Psoas muscle (tissue), 8 donors: ENCODE measurements at regions of chr9 and their contacts with region 1.

Region 1: DNA sequence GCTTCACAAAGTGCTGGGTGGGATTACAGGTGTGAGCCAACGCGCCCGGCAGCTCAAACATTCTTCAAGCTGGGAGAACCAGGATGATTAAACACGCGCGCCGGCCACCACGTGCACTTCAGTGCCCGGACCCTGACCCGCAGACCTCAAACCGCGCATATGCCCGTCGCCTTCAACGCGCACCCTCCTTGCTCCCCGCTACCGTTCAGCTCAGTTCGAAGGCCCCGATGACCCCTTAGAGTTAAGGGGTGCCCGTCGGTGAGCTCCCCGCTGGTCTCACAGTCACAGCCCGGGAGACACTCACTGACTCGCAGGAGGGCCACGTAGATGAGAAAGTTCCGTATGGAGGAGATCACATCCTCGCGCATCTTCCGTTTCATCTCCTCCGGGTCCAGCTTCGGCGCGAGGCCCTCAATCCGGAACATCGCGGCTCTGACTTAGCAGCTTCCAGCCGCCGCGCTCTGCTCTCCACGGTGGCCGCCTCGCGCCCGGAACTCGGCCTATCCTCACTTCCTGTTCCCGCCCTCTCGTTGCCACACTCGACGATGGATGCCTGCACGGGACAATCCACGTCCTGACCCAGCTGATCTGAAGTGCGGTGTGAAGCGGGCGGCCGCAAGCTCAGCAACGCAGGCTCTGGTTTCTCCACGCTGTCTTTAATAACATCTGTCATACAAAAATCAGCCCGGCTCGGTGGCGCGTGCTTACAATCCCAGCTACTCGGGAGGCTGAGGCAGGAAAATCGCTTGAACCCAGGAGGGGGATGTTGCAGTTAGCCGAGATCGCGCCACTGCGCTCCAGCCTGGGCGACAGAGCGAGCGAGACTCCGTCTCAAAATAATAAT is at the start of gene TOMM5:
- DNase-seq: peak; percentile 94 to 97
- ATAC-seq: peak; percentile 96 to 100 (median 98)
- H3K4me3 ChIP-seq: peak within 1 kb of the TSS; percentile 95
- H3K27ac ChIP-seq: peak within 1 kb of the TSS; percentile 92
- H3K4me1 ChIP-seq: peaks cover 24% of the 10 kb centered on the region
- H3K27me3 ChIP-seq: no peaks in the 10 kb centered on the region
- CTCF ChIP-seq: no peak
- total RNA-seq, gene TOMM5: 65.2 to 104 (median 98.9) TPM

Region 2: GRCh38 chr9:37575921-37576721 is 16.2 kb before region 1 on chr9 and contains the start of gene FBXO10:
- intact Hi-C with region 1: loop called in 1 of 2 experiments (anchors 2 kb)
- DNase-seq: peak; percentile 85 to 87
- ATAC-seq: peak; percentile 89
- H3K4me3 ChIP-seq: peak within 1 kb of the TSS; percentile 90
- H3K27ac ChIP-seq: peak within 1 kb of the TSS; percentile 98
- H3K4me1 ChIP-seq: peaks cover 39% of the 10 kb centered on the region
- H3K27me3 ChIP-seq: no peaks in the 10 kb centered on the region
- CTCF ChIP-seq: no peak
- total RNA-seq, gene FBXO10: 31.3 to 90.4 (median 43.0) TPM

Region 3: GRCh38 chr9:37645903-37646506 is 53.7 kb after region 1 on chr9:
- intact Hi-C with region 1: loop called in 1 of 2 experiments (anchors 5 kb)
- DNase-seq: no peak
- ATAC-seq: peak in 3 of 4 donors; percentile 68 to 72 (median 72)
- H3K4me3 ChIP-seq: no peak overlapping the region
- H3K27ac ChIP-seq: peak overlapping the region; percentile 57
- H3K4me1 ChIP-seq: peaks cover 14% of the 10 kb centered on the region
- H3K27me3 ChIP-seq: no peaks in the 10 kb centered on the region
- CTCF ChIP-seq: no peak

Region 4: GRCh38 chr9:37668116-37668601 is 75.8 kb after region 1 on chr9:
- intact Hi-C with region 1: loop called in 1 of 2 experiments (anchors 5 kb)
- DNase-seq: peak; percentile 34 to 69
- ATAC-seq: peak; percentile 89 to 92 (median 90)
- H3K4me3 ChIP-seq: peak overlapping the region; percentile 57
- H3K27ac ChIP-seq: peak overlapping the region; percentile 79
- H3K4me1 ChIP-seq: peaks cover 28% of the 10 kb centered on the region
- H3K27me3 ChIP-seq: no peaks in the 10 kb centered on the region
- CTCF ChIP-seq: peak; percentile 25

Region 5: GRCh38 chr9:37693260-37693659 is 100.9 kb after region 1 on chr9:
- intact Hi-C with region 1: no loop called
- DNase-seq: no peak
- ATAC-seq: peak; percentile 90 to 94 (median 92)
- H3K4me3 ChIP-seq: peak overlapping the region; percentile 63
- H3K27ac ChIP-seq: peak overlapping the region; percentile 81
- H3K4me1 ChIP-seq: peaks cover 9% of the 10 kb centered on the region
- H3K27me3 ChIP-seq: no peaks in the 10 kb centered on the region
- CTCF ChIP-seq: no peak

Region 6: GRCh38 chr9:37800631-37801286 is 208.4 kb after region 1 on chr9 and contains the start of gene DCAF10:
- intact Hi-C with region 1: loop called in 1 of 2 experiments (anchors 5 kb)
- DNase-seq: peak; percentile 90 to 93
- ATAC-seq: peak; percentile 96 to 98 (median 97)
- H3K4me3 ChIP-seq: peak within 1 kb of the TSS; percentile 82
- H3K27ac ChIP-seq: peak within 1 kb of the TSS; percentile 82
- H3K4me1 ChIP-seq: peaks cover 21% of the 10 kb centered on the region
- H3K27me3 ChIP-seq: no peaks in the 10 kb centered on the region
- CTCF ChIP-seq: no peak
- total RNA-seq, gene DCAF10: 20.2 to 27.2 (median 22.4) TPM

Region 7: GRCh38 chr9:37903647-37904444 is 311.5 kb after region 1 on chr9 and contains the start of gene SLC25A51:
- intact Hi-C with region 1: loop called in 1 of 2 experiments (anchors 10 kb)
- DNase-seq: peak; percentile 96
- ATAC-seq: peak; percentile 93 to 96 (median 94)
- H3K4me3 ChIP-seq: peak within 1 kb of the TSS; percentile 96
- H3K27ac ChIP-seq: peak within 1 kb of the TSS; percentile 78
- H3K4me1 ChIP-seq: peaks cover 21% of the 10 kb centered on the region
- H3K27me3 ChIP-seq: no peaks in the 10 kb centered on the region
- CTCF ChIP-seq: peak; percentile 91
- total RNA-seq, gene SLC25A51: 16.3 to 25.3 (median 18.4) TPM